G401 (cell line): ENCODE measurements at regions of chr6 and their contacts with region 1.

Region 1: DNA sequence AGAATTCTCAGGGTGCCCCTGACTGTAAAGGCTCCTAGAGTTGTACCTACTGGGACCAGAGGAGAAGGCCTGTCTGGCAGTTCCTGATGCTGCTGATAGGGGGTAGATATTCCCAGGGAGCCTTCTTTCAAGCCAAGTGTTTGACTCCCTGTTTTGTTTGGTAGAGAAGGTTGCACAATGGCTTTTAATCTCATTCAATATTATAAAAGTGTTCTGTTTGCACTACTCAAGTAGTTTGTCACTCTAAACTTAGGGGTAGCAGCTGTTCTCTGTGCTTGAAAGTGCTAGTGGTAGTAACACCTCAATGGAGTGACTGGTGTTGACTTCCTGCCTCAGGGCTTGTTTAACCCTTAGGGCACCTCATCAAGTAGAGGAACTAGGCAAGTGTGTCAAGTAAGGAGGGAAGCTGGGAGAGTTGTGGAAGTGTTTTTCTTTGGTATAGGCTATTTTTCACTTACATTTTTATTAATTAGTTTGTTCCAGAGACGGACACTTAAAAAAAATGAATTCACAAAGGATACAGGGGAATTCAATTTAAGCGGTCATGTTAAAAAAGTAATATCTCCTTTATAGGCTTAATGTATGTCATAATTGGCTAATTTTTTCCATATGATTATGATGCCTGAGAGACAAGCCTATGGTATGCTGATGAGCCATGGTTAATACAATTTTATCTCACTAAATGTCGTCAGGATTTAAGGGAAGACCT is 38.1 kb downstream of the BICRAL start:
- DNase-seq: no peak

Region 2: DNA sequence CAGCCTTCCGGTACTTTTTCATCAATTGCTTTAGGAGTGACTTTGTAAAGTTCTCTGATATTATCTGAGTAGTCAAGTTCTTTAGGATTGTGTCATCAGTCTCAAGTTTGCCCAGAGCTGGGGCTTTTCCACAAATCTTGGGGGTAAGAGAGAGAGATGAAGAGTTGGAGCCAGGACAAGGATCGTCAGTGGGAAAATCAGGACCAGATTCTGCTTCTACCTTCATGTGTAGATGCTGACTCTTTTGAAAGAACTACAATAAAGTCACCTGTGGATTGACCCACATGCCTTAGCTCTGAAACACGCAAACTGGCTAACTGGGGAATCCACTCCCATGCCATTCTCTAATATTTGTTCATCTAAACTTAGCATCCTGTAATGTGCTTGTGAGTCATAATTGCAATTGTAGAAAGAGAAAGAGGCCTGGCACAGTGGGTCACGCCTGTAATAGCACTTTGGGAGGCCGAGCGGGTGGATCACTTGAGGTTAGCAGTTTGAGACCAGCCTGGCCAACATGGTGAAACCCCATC is 53.8 kb before region 1 on chr6:
- in situ Hi-C with region 1: loop called (anchors 5 kb)
- DNase-seq: no peak

Region 3: GRCh38 chr6:42929821-42930360 is 109.9 kb after region 1 on chr6:
- in situ Hi-C with region 1: no loop called
- DNase-seq: no peak